ENCODE measurements at regions of chr18 and their contacts with region 1.

Region 1: DNA sequence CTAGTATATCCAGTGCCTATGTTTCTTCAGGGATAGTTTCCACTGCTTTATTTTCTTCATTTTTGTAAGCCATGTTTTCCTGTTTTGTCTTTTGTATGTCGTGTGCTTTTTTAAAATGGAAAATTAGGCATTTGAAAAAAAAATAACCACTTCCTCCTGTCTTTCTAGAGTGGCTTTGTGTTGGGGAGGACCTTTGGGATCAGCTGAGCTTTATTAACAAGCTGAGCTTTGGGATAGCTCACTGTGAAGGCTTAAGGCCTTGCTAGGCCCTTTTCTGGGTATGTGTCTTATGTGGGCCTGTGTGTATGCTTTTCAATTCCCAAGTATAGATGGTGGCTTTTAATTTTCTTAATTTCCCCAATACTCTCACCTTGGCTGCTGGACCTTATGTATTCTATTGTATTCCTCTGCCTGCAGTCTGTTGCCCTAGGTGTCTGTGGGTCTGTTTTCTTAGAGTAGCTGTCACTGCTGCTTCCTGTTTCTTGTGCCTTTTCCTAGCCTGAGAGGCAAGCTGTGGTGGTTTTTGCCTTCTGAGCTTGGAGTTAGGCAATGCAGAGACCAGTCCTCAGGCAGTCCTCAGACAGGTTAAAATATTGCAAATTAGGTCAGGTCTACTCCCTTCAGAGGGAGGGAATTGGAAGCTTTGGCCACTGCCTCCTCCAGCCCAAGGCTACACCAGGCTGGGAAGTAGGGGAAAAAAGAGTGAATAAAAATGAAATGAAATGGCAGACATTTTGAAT is 134.7 kb downstream of the LDLRAD4 start:
- DNase-seq: no peak
- ATAC-seq: no peak
- H3K4me3 ChIP-seq: no peak overlapping the region
- H3K27ac ChIP-seq: no peak overlapping the region
- H3K4me1 ChIP-seq: peaks cover 7% of the 10 kb centered on the region; the same call in 1 of the 2 replicates
- H3K27me3 ChIP-seq: no peaks in the 10 kb centered on the region
- CTCF ChIP-seq: no peak
- EP300 ChIP-seq: no peak
- POLR2A ChIP-seq: no peak
- RAD21 ChIP-seq: no peak

Region 2: GRCh38 chr18:13318731-13319501 is 34.3 kb before region 1 on chr18:
- CTCF ChIA-PET with region 1: no interaction called
- POLR2A ChIA-PET with region 1: no interaction called
- in situ Hi-C with region 1: no loop called
- intact Hi-C with region 1: loop called (anchors 5 kb)
- DNase-seq: no peak
- ATAC-seq: no peak
- H3K4me3 ChIP-seq: no peak overlapping the region
- H3K27ac ChIP-seq: no peak overlapping the region
- H3K4me1 ChIP-seq: peaks cover 1% of the 10 kb centered on the region
- H3K27me3 ChIP-seq: no peaks in the 10 kb centered on the region
- CTCF ChIP-seq: no peak
- EP300 ChIP-seq: no peak
- POLR2A ChIP-seq: no peak
- RAD21 ChIP-seq: no peak

Measured in HepG2 (cell line).